Ovary (tissue), 10 donors: ENCODE measurements at regions of chr7 and their contacts with region 1.

Region 1: GRCh38 chr7:44713680-44714335 is 34.8 kb upstream of the ZMIZ2 start:
- DNase-seq: no peak
- H3K4me3 ChIP-seq: no peak overlapping the region
- H3K27ac ChIP-seq: no peak overlapping the region
- H3K4me1 ChIP-seq: no peaks in the 10 kb centered on the region
- H3K27me3 ChIP-seq: no peaks in the 10 kb centered on the region
- CTCF ChIP-seq: no peak
- EP300 ChIP-seq: no peak
- POLR2A ChIP-seq: no peak

Region 2: DNA sequence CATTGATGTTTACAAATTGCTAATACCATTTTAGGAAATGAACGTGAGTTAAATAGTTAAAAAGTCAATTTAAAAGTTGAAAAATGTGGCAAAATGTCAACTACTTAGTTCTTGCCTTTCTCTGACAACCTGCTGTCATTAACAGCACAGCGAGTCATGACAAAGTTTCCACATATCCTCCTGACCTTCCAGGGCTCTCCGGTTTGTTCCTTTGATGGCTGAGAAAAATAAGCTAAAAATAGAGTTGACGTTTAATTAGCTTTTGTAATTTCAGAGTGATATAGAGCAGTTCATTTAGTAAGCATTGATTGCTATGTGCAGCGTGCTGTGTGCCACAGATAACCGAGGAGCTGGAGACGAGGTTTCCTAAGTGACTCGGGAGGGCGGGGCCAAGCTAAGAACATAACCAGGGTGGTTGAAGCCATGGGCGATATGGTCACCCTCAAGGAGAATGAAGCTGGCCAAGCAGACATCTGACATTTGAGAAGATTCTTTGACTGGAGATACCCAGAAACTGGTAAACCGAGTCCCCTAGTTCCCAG is 59.5 kb before region 1 on chr7:
- intact Hi-C with region 1: no loop called
- DNase-seq: no peak
- H3K4me3 ChIP-seq: no peak overlapping the region
- H3K27ac ChIP-seq: no peak overlapping the region
- H3K4me1 ChIP-seq: peaks cover 8% of the 10 kb centered on the region
- H3K27me3 ChIP-seq: no peaks in the 10 kb centered on the region
- CTCF ChIP-seq: no peak
- EP300 ChIP-seq: no peak
- POLR2A ChIP-seq: no peak

Region 3: GRCh38 chr7:44738876-44739665 is 25.3 kb after region 1 on chr7:
- intact Hi-C with region 1: loop called in 1 of 4 experiments (anchors 1 kb)
- DNase-seq: no peak
- H3K4me3 ChIP-seq: no peak overlapping the region
- H3K27ac ChIP-seq: no peak overlapping the region
- H3K4me1 ChIP-seq: no peaks in the 10 kb centered on the region
- H3K27me3 ChIP-seq: no peaks in the 10 kb centered on the region
- CTCF ChIP-seq: no peak
- EP300 ChIP-seq: no peak
- POLR2A ChIP-seq: no peak

Region 4: GRCh38 chr7:44847508-44847920 is 133.7 kb after region 1 on chr7:
- intact Hi-C with region 1: no loop called
- DNase-seq: peak; percentile 86 to 93 (median 90)
- H3K4me3 ChIP-seq: peak overlapping the region; percentile 77
- H3K27ac ChIP-seq: peak overlapping the region; percentile 92 to 99
- H3K4me1 ChIP-seq: peaks cover 9% of the 10 kb centered on the region
- H3K27me3 ChIP-seq: no peaks in the 10 kb centered on the region
- CTCF ChIP-seq: peak; percentile 86 to 96 (median 94)
- EP300 ChIP-seq: no peak
- POLR2A ChIP-seq: no peak

Region 5: DNA sequence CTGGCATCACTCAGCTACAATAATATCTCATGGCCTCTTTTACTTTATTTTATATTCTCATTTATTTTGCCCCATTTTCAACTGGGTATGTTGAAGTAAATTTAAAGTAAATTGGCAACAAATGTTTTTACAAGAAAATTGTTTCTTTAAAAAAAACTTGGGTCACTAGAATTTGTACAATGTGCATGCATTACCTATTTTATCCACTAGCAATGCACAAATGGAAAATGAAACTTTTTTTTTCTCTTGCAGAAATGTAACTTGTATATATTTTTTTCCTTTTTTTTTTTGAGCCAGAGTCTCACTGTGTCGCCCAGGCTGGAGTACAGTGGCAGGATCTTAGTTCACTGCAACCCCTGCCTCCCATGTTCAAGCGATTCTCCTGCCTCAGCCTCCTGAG is 144.4 kb after region 1 on chr7:
- intact Hi-C with region 1: no loop called
- DNase-seq: no peak
- H3K4me3 ChIP-seq: no peak overlapping the region
- H3K27ac ChIP-seq: no peak overlapping the region
- H3K4me1 ChIP-seq: peaks cover 1% of the 10 kb centered on the region
- H3K27me3 ChIP-seq: no peaks in the 10 kb centered on the region
- CTCF ChIP-seq: no peak
- EP300 ChIP-seq: no peak
- POLR2A ChIP-seq: no peak